GM12878 (cell line): ENCODE measurements at regions of chr2 and their contacts with region 1.

Region 1: GRCh38 chr2:138712212-138712979 is 67.8 kb downstream of the NXPH2 start:
- DNase-seq: peak; percentile 61
- ATAC-seq: peak; percentile 93
- H3K4me3 ChIP-seq: no peak overlapping the region
- H3K27ac ChIP-seq: no peak overlapping the region
- H3K4me1 ChIP-seq: peaks cover 14% of the 10 kb centered on the region; the same call in 1 of the 2 replicates
- H3K27me3 ChIP-seq: no peaks in the 10 kb centered on the region; a peak in 1 of 4 replicates
- CTCF ChIP-seq: no peak
- EP300 ChIP-seq: peak; percentile 49 to 74; a peak in 2 of 4 replicates
- POLR2A ChIP-seq: no peak
- RAD21 ChIP-seq: no peak

Region 2: GRCh38 chr2:138486363-138487198 is 225.8 kb before region 1 on chr2:
- CTCF ChIA-PET with region 1: interaction called, 12 read pairs
- POLR2A ChIA-PET with region 1: no interaction called
- RAD21 ChIA-PET with region 1: no interaction called
- SMC1A ChIA-PET with region 1: interaction called, 6 read pairs
- in situ Hi-C with region 1: no loop called
- intact Hi-C with region 1: no loop called
- DNase-seq: no peak
- ATAC-seq: peak; percentile 48; the same call in 2 of the 3 replicates
- H3K4me3 ChIP-seq: no peak overlapping the region
- H3K27ac ChIP-seq: no peak overlapping the region
- H3K4me1 ChIP-seq: no peaks in the 10 kb centered on the region
- H3K27me3 ChIP-seq: no peaks in the 10 kb centered on the region
- CTCF ChIP-seq: peak; percentile 19 to 21 (median 21); a peak in 4 of 6 replicates
- EP300 ChIP-seq: no peak
- POLR2A ChIP-seq: no peak
- RAD21 ChIP-seq: peak; percentile 31; the same call in 1 of the 2 replicates

Region 3: GRCh38 chr2:138846223-138846821 is 133.9 kb after region 1 on chr2:
- CTCF ChIA-PET with region 1: no interaction called
- POLR2A ChIA-PET with region 1: no interaction called
- RAD21 ChIA-PET with region 1: no interaction called
- SMC1A ChIA-PET with region 1: no interaction called
- in situ Hi-C with region 1: no loop called
- intact Hi-C with region 1: no loop called
- DNase-seq: no peak
- ATAC-seq: peak; percentile 92
- H3K4me3 ChIP-seq: no peak overlapping the region
- H3K27ac ChIP-seq: no peak overlapping the region
- H3K4me1 ChIP-seq: no peaks in the 10 kb centered on the region
- H3K27me3 ChIP-seq: no peaks in the 10 kb centered on the region
- CTCF ChIP-seq: peak; percentile 57 to 61 (median 60); a peak in 5 of 6 replicates
- EP300 ChIP-seq: no peak
- POLR2A ChIP-seq: no peak
- RAD21 ChIP-seq: peak; percentile 50